Calu3 (cell line): ENCODE measurements at regions of chr16 and their contacts with region 1.

Region 1: DNA sequence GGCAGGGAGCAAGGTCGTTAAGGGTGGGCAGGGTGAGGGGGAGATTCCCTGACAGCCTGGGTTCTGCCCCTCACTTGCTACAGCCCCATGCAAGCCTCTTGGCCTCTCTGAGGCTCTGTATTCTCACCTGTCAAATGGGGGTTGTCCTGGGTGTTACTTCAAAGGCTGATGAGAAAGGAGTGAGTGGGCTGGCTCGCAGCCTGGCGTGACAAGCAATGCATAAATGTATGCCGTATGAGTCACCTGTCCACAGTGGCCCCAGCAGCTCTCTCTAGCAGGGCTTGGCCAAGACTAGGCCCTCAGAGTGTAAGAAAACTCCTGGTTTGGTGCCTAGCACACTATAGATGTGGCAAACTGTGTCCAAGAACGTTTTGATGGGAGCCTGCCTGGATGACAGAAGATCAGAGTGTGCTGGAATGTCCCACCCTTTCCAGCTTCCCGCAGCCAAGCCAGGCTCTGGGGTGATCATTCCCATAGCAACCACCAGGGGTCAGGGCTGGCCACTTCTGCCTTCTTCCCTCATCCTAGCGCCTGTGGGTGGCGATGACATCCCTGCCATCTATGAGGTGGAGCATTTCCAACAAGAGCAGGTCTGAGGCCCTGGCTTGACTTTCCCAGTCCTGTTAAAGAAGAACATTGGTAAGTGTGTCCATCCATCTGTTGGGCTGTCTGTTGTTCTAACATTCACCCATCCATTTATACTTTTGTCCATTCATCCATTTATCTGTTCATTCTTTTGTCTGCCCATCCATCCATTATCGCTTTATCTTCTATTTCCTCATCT is 37.2 kb upstream of the ADGRG1 start:
- DNase-seq: peak; percentile 88
- H3K4me3 Mint-ChIP-seq: peak overlapping the region; percentile 21
- H3K27ac Mint-ChIP-seq: peak overlapping the region; percentile 62
- H3K4me1 Mint-ChIP-seq: peaks cover 30% of the 10 kb centered on the region
- H3K27me3 Mint-ChIP-seq: no peaks in the 10 kb centered on the region
- CTCF ChIP-seq: peak; percentile 97

Region 2: DNA sequence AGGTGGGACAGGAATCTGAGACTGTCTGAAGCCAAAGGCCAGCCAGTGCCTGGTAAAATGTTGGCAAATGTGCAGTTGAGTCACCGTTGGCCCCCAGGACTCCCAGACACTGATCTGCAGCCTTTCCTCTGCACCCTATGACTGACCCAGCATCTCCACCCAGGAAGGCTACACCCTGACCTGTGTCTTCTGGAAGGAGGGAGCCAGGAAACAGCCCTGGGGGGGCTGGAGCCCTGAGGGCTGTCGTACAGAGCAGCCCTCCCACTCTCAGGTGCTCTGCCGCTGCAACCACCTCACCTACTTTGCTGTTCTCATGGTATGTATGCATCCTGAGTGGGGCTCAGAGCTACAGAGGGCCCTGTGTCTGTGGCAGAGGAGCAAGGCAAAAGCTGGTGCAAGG is 24.8 kb before region 1 on chr16:
- CTCF ChIA-PET with region 1: no interaction called
- intact Hi-C with region 1: no loop called
- DNase-seq: no peak
- H3K4me3 Mint-ChIP-seq: no peak overlapping the region
- H3K27ac Mint-ChIP-seq: no peak overlapping the region
- H3K4me1 Mint-ChIP-seq: no peaks in the 10 kb centered on the region
- H3K27me3 Mint-ChIP-seq: peaks cover 72% of the 10 kb centered on the region
- CTCF ChIP-seq: no peak

Region 3: DNA sequence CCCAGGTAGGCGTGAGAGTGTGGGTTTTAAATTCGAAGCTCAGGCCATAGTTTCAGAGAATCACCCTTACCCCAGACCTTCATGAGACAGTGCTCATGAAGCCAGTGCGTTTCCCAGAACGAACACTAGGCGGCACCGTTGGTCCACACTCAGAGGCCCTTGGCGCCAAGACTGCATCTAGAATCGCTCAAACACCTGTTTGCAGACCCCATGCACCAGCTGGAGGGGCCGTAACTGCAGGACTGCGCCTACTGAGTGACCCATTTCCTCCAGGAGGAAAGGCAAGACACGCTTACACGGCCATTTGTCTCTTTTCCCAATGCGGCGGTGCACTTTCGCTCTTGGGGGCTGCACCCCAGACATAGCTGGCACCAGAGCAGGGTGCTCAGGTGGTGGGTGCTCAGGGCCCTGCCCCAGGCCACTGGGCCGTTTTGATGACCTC is 14.8 kb before region 1 on chr16:
- CTCF ChIA-PET with region 1: interaction called, 12 read pairs
- intact Hi-C with region 1: no loop called
- DNase-seq: peak; percentile 82
- H3K4me3 Mint-ChIP-seq: no peak overlapping the region
- H3K27ac Mint-ChIP-seq: no peak overlapping the region
- H3K4me1 Mint-ChIP-seq: peaks cover 8% of the 10 kb centered on the region
- H3K27me3 Mint-ChIP-seq: peaks cover 35% of the 10 kb centered on the region
- CTCF ChIP-seq: peak; percentile 98

Region 4: DNA sequence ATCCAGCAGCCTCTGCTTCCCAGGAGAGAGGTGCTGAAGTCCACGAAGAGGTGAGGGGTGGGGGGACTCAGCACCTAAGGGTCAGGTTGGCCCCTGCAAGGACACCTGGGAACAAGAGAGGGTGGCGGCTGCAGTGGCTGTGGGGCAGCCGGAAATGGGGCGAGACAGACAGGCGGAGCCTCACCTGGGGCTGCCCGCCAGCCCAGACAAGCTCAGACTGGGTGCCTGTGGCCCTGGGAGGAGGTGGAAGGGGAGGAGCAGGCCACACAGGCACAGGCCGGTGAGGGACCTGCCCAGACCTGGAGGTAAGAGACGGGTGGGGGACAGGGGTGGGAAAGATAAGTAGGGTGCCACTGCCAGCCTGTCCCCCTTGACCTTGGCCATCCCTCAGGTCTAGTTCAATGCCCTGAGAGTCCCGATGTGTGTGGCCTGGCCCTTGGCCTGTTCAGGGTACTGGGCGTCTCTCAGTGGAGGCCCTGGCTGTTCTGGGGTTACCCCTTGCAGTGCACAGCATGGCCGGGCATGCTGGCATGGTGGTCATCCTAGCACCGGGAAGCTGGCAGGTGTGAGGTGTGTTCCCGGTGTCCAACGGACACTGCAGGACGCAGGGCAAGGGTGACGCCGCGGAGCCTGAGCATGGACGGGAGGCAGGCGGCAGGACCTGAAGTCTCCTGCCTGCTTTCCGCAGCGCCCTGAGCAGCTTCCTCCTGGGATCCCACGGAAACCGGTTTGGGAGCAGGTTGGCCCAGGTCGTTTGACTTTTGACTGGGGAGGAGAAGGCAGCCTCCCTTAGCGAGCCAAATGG is 28.8 kb after region 1 on chr16:
- CTCF ChIA-PET with region 1: interaction called, 16 read pairs
- intact Hi-C with region 1: no loop called
- DNase-seq: peak; percentile 88
- H3K4me3 Mint-ChIP-seq: peak overlapping the region; percentile 90
- H3K27ac Mint-ChIP-seq: peak overlapping the region; percentile 96
- H3K4me1 Mint-ChIP-seq: peaks cover 61% of the 10 kb centered on the region
- H3K27me3 Mint-ChIP-seq: no peaks in the 10 kb centered on the region
- CTCF ChIP-seq: no peak

Region 5: GRCh38 chr16:57628008-57628781 is 36.9 kb after region 1 on chr16 and contains the start of gene ADGRG1:
- CTCF ChIA-PET with region 1: interaction called, 16 read pairs
- intact Hi-C with region 1: no loop called
- DNase-seq: peak; percentile 90
- H3K4me3 Mint-ChIP-seq: peak within 1 kb of the TSS; percentile 67
- H3K27ac Mint-ChIP-seq: peak within 1 kb of the TSS; percentile 73
- H3K4me1 Mint-ChIP-seq: peaks cover 74% of the 10 kb centered on the region
- H3K27me3 Mint-ChIP-seq: no peaks in the 10 kb centered on the region
- CTCF ChIP-seq: peak; percentile 30
- total RNA-seq, gene ADGRG1: 269 and 278 TPM in 2 replicates

Region 6: DNA sequence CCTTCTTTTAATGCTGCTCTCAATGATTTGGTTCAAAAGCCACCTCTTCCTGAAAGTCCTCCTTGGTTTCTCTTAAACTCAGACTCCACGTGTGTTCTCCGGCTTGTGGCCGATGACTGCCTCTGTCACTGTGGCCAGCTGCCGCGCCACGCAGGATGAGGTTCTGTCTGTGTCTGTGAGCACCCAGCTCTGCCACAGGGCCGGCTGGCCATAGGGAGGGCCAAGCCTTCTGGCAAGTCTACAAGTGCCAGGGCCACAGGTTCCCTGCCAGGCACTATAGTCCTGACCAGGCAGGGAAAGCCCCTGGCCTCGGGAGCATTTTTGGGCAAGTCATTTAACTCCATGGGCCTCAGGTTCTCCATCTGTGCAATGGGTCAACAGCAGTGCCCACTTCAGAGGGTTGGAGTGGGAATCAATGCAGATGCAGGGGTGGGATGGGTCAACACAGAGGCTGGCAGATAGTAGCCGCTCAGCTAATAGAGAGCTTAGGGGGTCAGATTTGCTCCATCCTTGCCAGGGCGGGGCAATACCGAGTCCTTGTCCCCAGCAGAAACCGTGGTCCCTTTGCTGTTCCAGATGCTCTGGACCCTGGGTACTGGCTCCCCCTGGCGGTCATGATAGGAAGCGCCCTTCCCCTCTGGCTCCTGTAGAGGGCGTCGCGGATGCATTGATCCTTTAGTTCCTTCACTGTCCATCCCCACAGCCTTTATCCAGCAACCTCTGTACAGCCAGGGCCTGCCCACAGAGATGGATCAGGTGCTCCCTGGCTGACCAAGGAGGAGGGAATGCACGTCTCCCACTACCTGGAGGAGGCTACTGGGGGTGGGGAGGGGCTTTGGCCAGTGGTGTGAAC is 57.5 kb after region 1 on chr16:
- CTCF ChIA-PET with region 1: interaction called, 38 read pairs
- intact Hi-C with region 1: loop called (anchors 2 kb)
- DNase-seq: peak; percentile 92
- H3K4me3 Mint-ChIP-seq: no peak overlapping the region
- H3K27ac Mint-ChIP-seq: peak overlapping the region; percentile 64
- H3K4me1 Mint-ChIP-seq: peaks cover 21% of the 10 kb centered on the region
- H3K27me3 Mint-ChIP-seq: no peaks in the 10 kb centered on the region
- CTCF ChIP-seq: peak; percentile 100

Region 7: GRCh38 chr16:57720142-57720575 is 128.9 kb after region 1 on chr16:
- CTCF ChIA-PET with region 1: interaction called, 4 read pairs
- intact Hi-C with region 1: loop called (anchors 5 kb)
- DNase-seq: peak; percentile 90
- H3K4me3 Mint-ChIP-seq: no peak overlapping the region
- H3K27ac Mint-ChIP-seq: no peak overlapping the region
- H3K4me1 Mint-ChIP-seq: no peaks in the 10 kb centered on the region
- H3K27me3 Mint-ChIP-seq: peaks cover 34% of the 10 kb centered on the region
- CTCF ChIP-seq: peak; percentile 68

Region 8: GRCh38 chr16:57734925-57735754 is 143.9 kb after region 1 on chr16:
- CTCF ChIA-PET with region 1: interaction called, 15 read pairs
- intact Hi-C with region 1: loop called (anchors 5 kb)
- DNase-seq: peak; percentile 99
- H3K4me3 Mint-ChIP-seq: peak overlapping the region; percentile 89
- H3K27ac Mint-ChIP-seq: peak overlapping the region; percentile 88
- H3K4me1 Mint-ChIP-seq: peaks cover 13% of the 10 kb centered on the region
- H3K27me3 Mint-ChIP-seq: peaks cover 19% of the 10 kb centered on the region
- CTCF ChIP-seq: no peak

Region 9: DNA sequence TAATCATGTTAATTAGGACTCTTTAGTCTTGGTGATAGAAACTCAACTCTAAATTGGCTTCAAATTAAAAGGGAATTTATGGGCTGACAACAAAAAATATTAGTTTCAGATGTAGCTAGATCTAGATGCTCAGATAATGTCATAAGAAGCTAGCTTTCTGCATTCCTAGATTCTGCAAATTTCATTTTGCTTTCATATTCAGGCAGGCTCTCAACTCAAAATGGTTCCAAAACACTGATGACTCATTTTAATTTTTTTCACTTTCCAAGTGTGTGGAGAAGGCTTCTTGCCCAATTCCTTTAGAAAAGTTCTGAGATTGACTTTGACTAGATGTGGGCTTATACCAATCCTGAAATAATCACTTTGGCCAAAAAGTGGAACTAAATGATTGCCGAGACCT is 1379.5 kb after region 1 on chr16:
- CTCF ChIA-PET with region 1: no interaction called
- intact Hi-C with region 1: no loop called
- DNase-seq: no peak
- H3K4me3 Mint-ChIP-seq: no peak overlapping the region
- H3K27ac Mint-ChIP-seq: no peak overlapping the region
- H3K4me1 Mint-ChIP-seq: no peaks in the 10 kb centered on the region
- H3K27me3 Mint-ChIP-seq: no peaks in the 10 kb centered on the region
- CTCF ChIP-seq: no peak